Ovary (tissue), 10 donors: ENCODE measurements at regions of chr6 and their contacts with region 1.

Region 1: DNA sequence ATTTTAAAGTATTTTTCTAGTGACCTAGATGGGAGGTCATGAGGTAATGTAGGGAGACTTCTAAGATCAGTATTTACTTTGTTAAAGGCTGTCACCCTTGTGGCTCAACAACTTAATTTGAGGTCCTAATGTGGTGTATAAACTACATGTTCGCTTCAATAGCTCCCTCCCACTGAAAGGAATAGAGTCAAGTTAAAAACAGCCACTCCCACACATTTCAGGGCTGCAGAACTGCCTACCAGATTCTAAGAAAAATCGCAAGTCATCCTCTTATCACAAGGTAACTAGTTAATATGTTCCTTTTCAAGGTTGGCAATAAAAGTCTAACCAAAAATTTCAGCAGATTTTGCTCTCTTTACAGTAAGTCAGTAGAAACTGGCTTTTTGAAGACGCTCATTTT is 15.1 kb downstream of the GSTA1 start:
- DNase-seq: no peak
- H3K4me3 ChIP-seq: no peak overlapping the region
- H3K27ac ChIP-seq: no peak overlapping the region
- H3K4me1 ChIP-seq: no peaks in the 10 kb centered on the region
- H3K27me3 ChIP-seq: no peaks in the 10 kb centered on the region
- CTCF ChIP-seq: no peak
- EP300 ChIP-seq: no peak
- POLR2A ChIP-seq: no peak

Region 2: GRCh38 chr6:52820198-52820597 is 31.7 kb after region 1 on chr6:
- intact Hi-C with region 1: loop called in 2 of 4 experiments (anchors 2 to 5 kb)
- DNase-seq: no peak
- H3K4me3 ChIP-seq: no peak overlapping the region
- H3K27ac ChIP-seq: no peak overlapping the region
- H3K4me1 ChIP-seq: no peaks in the 10 kb centered on the region
- H3K27me3 ChIP-seq: no peaks in the 10 kb centered on the region
- CTCF ChIP-seq: no peak
- EP300 ChIP-seq: no peak
- POLR2A ChIP-seq: no peak

Region 3: GRCh38 chr6:52829046-52829817 is 40.8 kb after region 1 on chr6:
- intact Hi-C with region 1: loop called in 2 of 4 experiments (anchors 2 to 5 kb)
- DNase-seq: no peak
- H3K4me3 ChIP-seq: no peak overlapping the region
- H3K27ac ChIP-seq: no peak overlapping the region
- H3K4me1 ChIP-seq: no peaks in the 10 kb centered on the region
- H3K27me3 ChIP-seq: no peaks in the 10 kb centered on the region
- CTCF ChIP-seq: no peak
- EP300 ChIP-seq: no peak
- POLR2A ChIP-seq: no peak